IMR-90 (cell line): ENCODE measurements at regions of chr1 and their contacts with region 1.

Region 1: DNA sequence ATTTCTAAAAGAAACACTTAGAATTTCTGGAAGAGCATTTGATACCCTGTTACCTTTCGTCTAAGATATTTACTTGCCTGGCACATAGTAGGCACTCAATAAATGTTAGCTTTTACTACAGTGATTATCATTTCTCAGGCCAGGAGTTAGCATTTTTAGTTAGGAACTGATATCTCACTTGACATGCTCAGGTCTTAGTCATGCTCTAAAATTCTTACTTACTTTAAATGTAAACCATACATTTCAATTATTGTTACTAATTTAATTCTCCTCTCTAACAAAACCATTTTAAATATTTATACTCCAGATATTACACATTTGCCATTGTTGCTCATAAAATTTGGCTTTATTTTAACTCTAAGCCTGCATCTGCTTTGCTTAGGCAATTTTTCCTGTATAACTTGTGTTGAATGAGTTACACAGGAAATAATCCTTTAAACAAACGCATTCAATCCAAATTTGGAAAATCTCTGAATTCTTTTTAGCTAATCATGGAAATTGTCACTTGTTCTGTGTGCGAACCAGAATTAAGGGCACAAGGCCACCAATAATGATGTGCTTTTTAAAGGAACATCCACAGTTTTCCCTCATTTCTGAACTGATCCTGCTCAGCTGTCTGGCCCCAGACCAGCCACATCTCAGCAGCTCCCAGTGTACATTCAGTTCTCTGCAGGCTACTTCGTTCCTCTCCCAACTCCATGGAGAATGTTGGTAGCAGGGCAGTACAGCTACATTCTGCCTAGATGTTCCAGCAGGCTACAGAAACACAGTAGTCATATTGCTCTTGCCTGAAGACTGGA is 15.6 kb downstream of the NIBAN1 start:
- DNase-seq: peak; percentile 72
- ATAC-seq: peak; percentile 74
- H3K4me3 ChIP-seq: no peak overlapping the region
- H3K27ac ChIP-seq: peak overlapping the region; percentile 88
- H3K4me1 ChIP-seq: peaks cover 6% of the 10 kb centered on the region
- H3K27me3 ChIP-seq: no peaks in the 10 kb centered on the region
- CTCF ChIP-seq: no peak
- POLR2A ChIP-seq: no peak
- RAD21 ChIP-seq: no peak

Region 2: GRCh38 chr1:184626076-184627006 is 332.4 kb before region 1 on chr1:
- CTCF ChIA-PET with region 1: no interaction called
- POLR2A ChIA-PET with region 1: no interaction called
- dilution Hi-C with region 1: no loop called
- in situ Hi-C with region 1: no loop called
- intact Hi-C with region 1: no loop called
- DNase-seq: no peak
- ATAC-seq: no peak
- H3K4me3 ChIP-seq: no peak overlapping the region
- H3K27ac ChIP-seq: no peak overlapping the region
- H3K4me1 ChIP-seq: peaks cover 11% of the 10 kb centered on the region
- H3K27me3 ChIP-seq: no peaks in the 10 kb centered on the region; the same call in 1 of the 2 replicates
- CTCF ChIP-seq: no peak
- POLR2A ChIP-seq: no peak
- RAD21 ChIP-seq: no peak

Region 3: GRCh38 chr1:184910691-184911091 is 48.1 kb before region 1 on chr1:
- CTCF ChIA-PET with region 1: no interaction called
- POLR2A ChIA-PET with region 1: no interaction called
- dilution Hi-C with region 1: no loop called
- in situ Hi-C with region 1: no loop called
- intact Hi-C with region 1: no loop called
- DNase-seq: peak; percentile 28
- ATAC-seq: peak; percentile 54
- H3K4me3 ChIP-seq: no peak overlapping the region
- H3K27ac ChIP-seq: peak overlapping the region; percentile 10; the same call in 1 of the 2 replicates
- H3K4me1 ChIP-seq: peaks cover 6% of the 10 kb centered on the region
- H3K27me3 ChIP-seq: no peaks in the 10 kb centered on the region
- CTCF ChIP-seq: no peak
- POLR2A ChIP-seq: no peak
- RAD21 ChIP-seq: no peak

Region 4: GRCh38 chr1:186108346-186108945 is 1149.7 kb after region 1 on chr1:
- CTCF ChIA-PET with region 1: no interaction called
- POLR2A ChIA-PET with region 1: interaction called, 11 read pairs
- dilution Hi-C with region 1: no loop called
- in situ Hi-C with region 1: no loop called
- intact Hi-C with region 1: no loop called
- DNase-seq: no peak
- ATAC-seq: no peak
- H3K4me3 ChIP-seq: no peak overlapping the region
- H3K27ac ChIP-seq: no peak overlapping the region
- H3K4me1 ChIP-seq: 0 out of 2 replicates have a peak, but pooled peaks cover under 1% of the 10 kb centered on the region
- H3K27me3 ChIP-seq: no peaks in the 10 kb centered on the region
- CTCF ChIP-seq: no peak
- POLR2A ChIP-seq: no peak
- RAD21 ChIP-seq: no peak